Common myeloid progenitor, CD34-positive (primary cell): ENCODE measurements at regions of chr2 and their contacts with region 1.

Region 1: DNA sequence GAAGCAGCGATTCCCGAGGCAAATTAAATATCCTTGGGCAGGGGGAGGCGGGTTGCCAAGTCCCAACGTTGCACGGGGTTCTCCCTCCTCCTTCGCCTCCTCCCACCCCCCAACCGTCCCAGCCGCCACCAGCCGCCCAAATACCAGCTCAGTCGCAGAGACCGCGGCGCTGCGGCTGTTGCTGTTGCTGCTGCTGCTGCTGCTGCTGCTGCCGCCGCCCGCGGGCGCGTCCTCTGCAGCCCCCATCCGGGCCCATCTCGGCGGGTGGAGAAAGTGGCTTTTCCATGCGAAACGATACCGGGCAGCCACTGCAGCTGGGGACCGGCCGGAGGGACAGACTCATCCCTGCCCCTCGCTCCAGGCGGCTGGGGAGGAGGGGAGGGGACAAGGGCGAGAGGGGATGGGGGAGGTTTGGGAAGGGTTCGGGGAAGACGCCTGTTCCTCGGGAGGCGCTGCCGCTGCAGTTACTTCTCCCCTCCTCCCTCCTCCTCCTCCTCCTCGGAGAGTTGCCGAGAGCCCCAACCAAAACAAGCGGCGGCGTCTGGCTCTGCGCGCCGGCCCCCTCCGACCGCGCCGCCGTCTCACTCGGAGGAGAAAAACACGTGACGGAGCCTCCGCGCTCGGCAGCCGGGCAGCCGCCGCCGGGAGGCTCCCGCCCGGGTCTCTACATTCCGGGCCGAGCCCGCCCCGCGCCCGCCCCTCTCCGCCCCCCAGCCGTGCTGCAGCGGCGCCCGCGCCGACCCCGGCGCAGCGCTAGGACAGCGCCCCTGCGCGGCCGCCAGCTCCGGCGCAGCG is at the start of gene IRS1:
- DNase-seq: peak in 2 of 3 donors; percentile 58 to 72
- H3K4me3 ChIP-seq: peak within 1 kb of the TSS; percentile 52 to 76 (median 66)
- H3K27ac ChIP-seq: no peak within 1 kb of the TSS
- H3K4me1 ChIP-seq: peaks cover 0 to 34% (median 31%) of the 10 kb centered on the region in 4 experiments
- H3K27me3 ChIP-seq: peaks cover 0 to 56% (median 22%) of the 10 kb centered on the region in 5 experiments

Region 2: DNA sequence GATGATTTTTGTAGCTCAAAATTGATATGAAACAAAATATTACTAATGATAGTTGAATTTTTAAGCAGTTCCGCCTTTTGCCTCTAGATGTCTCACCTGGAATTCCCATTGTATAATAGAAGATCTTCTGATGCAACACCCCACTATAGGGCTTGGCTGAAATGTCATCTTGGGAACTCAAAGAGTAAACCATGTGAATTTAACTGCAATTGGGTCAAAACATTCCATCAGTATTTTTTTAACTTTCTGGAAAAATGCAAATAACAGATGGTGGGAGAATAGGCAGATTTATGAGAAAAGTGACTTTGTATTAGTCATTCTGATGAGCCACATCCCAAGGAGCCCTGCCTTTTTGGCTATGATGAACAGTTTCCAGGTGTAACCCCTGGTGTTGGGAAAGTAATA is 909.9 kb before region 1 on chr2:
- CTCF ChIA-PET with region 1: interaction called, 15 read pairs
- POLR2A ChIA-PET with region 1: no interaction called
- DNase-seq: peak; percentile 12 to 37 (median 29)
- H3K4me3 ChIP-seq: no peak overlapping the region
- H3K27ac ChIP-seq: no peak overlapping the region
- H3K4me1 ChIP-seq: no peaks in the 10 kb centered on the region
- H3K27me3 ChIP-seq: no peaks in the 10 kb centered on the region

Region 3: DNA sequence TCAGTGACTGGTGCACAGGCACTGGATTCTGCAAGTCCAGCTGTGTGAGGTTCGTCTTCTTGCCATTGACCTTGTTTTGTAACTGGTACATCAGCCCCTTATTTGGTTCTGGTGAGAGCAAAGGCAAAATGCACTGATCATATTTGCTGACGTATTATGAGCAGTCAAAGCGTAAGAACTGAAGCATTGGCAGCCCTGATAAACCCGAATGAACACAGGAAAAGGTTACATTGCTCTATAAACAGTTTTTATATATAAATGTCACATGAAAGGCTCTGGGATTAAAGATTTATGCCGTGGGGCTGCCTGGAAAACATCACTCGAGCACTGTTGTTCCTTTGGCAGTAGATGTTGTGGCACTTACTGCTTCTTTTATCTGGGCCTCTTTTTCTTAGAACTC is 167.7 kb before region 1 on chr2:
- CTCF ChIA-PET with region 1: no interaction called
- POLR2A ChIA-PET with region 1: no interaction called
- DNase-seq: no peak
- H3K4me3 ChIP-seq: no peak overlapping the region
- H3K27ac ChIP-seq: no peak overlapping the region
- H3K4me1 ChIP-seq: no peaks in the 10 kb centered on the region
- H3K27me3 ChIP-seq: peaks cover 6 to 75% (median 31%) of the 10 kb centered on the region in 5 experiments

Region 4: DNA sequence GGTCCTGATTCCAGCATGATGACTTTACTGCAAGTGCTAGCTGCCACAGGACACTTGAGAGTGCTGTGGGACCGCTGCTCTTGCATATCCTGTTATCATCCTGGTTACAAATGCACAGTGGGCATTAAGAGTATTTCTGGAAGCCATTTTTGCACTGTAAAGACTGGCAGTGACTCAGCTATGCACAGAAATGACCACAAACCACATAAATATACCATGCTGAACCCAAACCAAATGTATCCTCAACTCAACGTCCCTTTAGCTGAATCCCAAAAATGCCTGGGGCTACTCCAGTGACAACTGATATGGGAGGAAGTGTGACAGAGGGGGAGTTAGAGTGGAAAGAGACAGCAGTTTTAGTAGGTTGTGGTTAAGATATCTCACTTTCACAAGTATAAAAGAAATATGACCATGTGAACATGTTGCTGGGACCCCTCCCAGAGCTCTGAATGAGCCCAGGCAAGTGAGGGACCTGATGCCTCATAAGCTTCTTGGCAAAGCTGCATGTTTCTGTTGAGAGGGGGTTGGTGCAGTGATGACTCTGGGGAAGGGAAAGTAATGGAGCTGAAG is 73.8 kb after region 1 on chr2:
- CTCF ChIA-PET with region 1: no interaction called
- POLR2A ChIA-PET with region 1: no interaction called
- DNase-seq: peak; percentile 6 to 64 (median 55)
- H3K4me3 ChIP-seq: no peak overlapping the region
- H3K27ac ChIP-seq: no peak overlapping the region
- H3K4me1 ChIP-seq: peaks cover 0 to 11% (median 5%) of the 10 kb centered on the region in 4 experiments
- H3K27me3 ChIP-seq: no peaks in the 10 kb centered on the region

Region 5: GRCh38 chr2:227238238-227239237 is 439.2 kb after region 1 on chr2:
- CTCF ChIA-PET with region 1: no interaction called
- POLR2A ChIA-PET with region 1: no interaction called
- DNase-seq: peak; percentile 29 to 67 (median 56)
- H3K4me3 ChIP-seq: no peak overlapping the region
- H3K27ac ChIP-seq: no peak overlapping the region
- H3K4me1 ChIP-seq: no peaks in the 10 kb centered on the region
- H3K27me3 ChIP-seq: peaks cover 0 to 1% (median 0%) of the 10 kb centered on the region in 5 experiments